ENCODE measurements at regions of chr6 and their contacts with region 1.

Region 1: DNA sequence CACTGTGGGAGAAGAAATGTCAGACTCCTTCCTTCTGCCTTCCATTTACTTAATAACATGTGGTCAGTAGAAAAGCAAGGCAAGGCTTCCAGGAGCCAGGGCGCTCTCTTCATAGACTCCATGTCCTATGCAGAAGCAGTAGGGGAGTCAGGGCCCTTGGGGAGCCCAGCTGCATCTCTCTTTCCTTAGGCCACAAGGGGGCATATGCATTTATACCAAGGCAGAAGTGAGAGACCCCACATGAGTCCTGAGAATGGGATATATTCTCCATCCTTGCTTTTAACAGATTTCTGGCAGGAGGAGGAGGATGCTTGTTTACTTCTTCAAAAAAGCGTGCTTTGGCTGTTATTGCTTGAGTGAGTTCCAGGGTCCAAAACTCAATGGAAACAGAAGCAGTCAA is 198.5 kb downstream of the HIVEP2 start:
- DNase-seq: peak; percentile 70
- ATAC-seq: peak; percentile 56
- H3K4me3 ChIP-seq: no peak overlapping the region
- H3K4me3 Mint-ChIP-seq: no peak overlapping the region
- H3K27ac ChIP-seq: no peak overlapping the region
- H3K27ac Mint-ChIP-seq: no peak overlapping the region
- H3K4me1 ChIP-seq: peaks cover 0 to 5% of the 10 kb centered on the region in 2 donors
- H3K4me1 Mint-ChIP-seq: peaks cover 17% of the 10 kb centered on the region
- H3K27me3 ChIP-seq: no peaks in the 10 kb centered on the region
- H3K27me3 Mint-ChIP-seq: no peaks in the 10 kb centered on the region
- CTCF ChIP-seq: peak; percentile 69

Region 2: GRCh38 chr6:142671791-142672190 is 74.7 kb before region 1 on chr6:
- CTCF ChIA-PET with region 1: no interaction called
- POLR2A ChIA-PET with region 1: no interaction called
- intact Hi-C with region 1: no loop called
- DNase-seq: peak; percentile 73
- ATAC-seq: peak; percentile 49
- H3K4me3 ChIP-seq: no peak overlapping the region
- H3K4me3 Mint-ChIP-seq: no peak overlapping the region
- H3K27ac ChIP-seq: no peak overlapping the region
- H3K27ac Mint-ChIP-seq: no peak overlapping the region
- H3K4me1 ChIP-seq: peaks cover 11 to 12% of the 10 kb centered on the region in 2 donors
- H3K4me1 Mint-ChIP-seq: peaks cover 6% of the 10 kb centered on the region
- H3K27me3 ChIP-seq: no peaks in the 10 kb centered on the region
- H3K27me3 Mint-ChIP-seq: peaks cover 14% of the 10 kb centered on the region
- CTCF ChIP-seq: no peak

Region 3: DNA sequence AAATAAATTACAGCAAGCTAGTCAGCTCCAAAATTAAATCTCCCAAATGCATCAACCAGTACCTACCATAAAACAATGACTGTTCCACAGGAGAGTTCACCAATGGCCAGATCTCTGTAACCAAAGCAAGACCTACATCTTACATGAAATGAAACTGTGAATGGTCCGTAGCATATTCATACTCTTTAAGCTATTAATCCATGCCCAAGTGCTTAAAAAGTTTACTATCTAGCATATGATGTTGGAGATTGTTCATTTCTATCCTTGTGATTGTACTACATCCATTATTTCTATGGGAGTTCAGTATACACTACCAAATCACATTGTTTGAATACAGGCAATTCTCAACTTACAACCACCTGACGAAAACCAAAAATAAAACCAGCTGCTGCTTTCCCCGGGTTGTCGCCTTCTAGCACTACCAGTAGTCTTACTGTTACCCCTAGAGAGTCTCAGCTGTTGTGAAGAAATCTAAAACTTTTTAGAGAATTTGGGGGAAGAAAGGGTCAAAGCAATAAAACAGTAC is 160.5 kb after region 1 on chr6:
- CTCF ChIA-PET with region 1: interaction called, 3 read pairs
- POLR2A ChIA-PET with region 1: no interaction called
- intact Hi-C with region 1: loop called (anchors 5 kb)
- DNase-seq: peak; percentile 52
- ATAC-seq: no peak
- H3K4me3 ChIP-seq: peak overlapping the region in 4 of 5 experiments; percentile 2 to 57 (median 21)
- H3K4me3 Mint-ChIP-seq: peak overlapping the region; percentile 85
- H3K27ac ChIP-seq: peak overlapping the region; percentile 36 to 49
- H3K27ac Mint-ChIP-seq: peak overlapping the region; percentile 32
- H3K4me1 ChIP-seq: peaks cover 18 to 20% of the 10 kb centered on the region in 2 donors
- H3K4me1 Mint-ChIP-seq: peaks cover 44% of the 10 kb centered on the region
- H3K27me3 ChIP-seq: no peaks in the 10 kb centered on the region
- H3K27me3 Mint-ChIP-seq: no peaks in the 10 kb centered on the region
- CTCF ChIP-seq: no peak

Region 4: GRCh38 chr6:143112084-143112768 is 365.7 kb after region 1 on chr6:
- CTCF ChIA-PET with region 1: no interaction called
- POLR2A ChIA-PET with region 1: no interaction called
- intact Hi-C with region 1: no loop called
- DNase-seq: no peak
- ATAC-seq: no peak
- H3K4me3 ChIP-seq: no peak overlapping the region
- H3K4me3 Mint-ChIP-seq: no peak overlapping the region
- H3K27ac ChIP-seq: no peak overlapping the region
- H3K27ac Mint-ChIP-seq: no peak overlapping the region
- H3K4me1 ChIP-seq: peaks cover 0 to 5% of the 10 kb centered on the region in 2 donors
- H3K4me1 Mint-ChIP-seq: peaks cover 6% of the 10 kb centered on the region
- H3K27me3 ChIP-seq: no peaks in the 10 kb centered on the region
- H3K27me3 Mint-ChIP-seq: no peaks in the 10 kb centered on the region
- CTCF ChIP-seq: no peak

Measured in B cell (primary cell).